IMR-90 (cell line): ENCODE measurements at regions of chr7 and their contacts with region 1.

Region 1: DNA sequence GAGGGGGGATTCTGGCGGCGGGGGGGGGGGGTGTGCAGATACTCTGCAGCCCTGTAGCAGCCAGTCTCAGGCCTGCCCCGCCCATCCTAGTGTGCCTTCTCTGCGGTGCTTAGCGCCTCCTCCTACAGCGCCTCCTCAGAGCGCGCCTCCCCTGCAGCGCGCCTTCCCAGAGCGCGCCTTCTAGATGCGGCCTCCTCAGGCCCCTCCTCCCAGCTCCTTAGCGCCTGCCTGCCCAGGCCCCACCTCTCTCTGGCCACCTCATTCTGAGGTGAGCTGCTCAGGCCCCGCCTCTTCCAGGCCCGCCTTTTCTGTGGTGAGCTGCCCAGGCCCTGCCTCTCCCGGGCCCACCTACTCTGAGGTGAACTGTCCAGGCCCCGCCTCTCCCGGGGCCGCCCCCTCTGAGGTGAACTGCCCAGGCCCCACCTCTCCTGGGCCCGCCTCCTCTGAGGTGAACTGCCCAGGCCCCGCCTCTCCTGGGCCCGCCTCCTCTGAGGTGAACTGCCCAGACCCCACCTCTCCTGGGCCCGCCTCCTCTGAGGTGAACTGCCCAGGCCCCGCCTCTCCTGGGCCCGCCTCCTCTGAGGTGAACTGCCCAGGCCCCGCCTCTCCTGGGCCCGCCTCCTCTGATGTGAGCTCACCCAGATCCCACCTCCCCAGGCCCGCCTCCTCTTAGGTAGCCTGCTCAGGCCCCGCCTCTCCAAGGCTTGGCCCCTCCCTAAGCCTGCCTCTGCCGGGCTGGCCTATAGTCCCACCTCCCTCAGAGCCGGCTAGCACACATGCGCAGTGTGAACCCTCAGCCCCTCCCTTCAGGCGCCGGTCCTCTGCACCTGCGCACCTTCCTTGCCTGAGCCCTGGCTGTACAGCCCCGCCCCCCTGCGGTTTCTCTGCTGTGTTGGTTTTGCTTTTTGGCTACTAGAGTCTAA is 2.1 kb upstream of the SGCE start:
- DNase-seq: peak; percentile 90
- ATAC-seq: peak; percentile 91
- H3K4me3 ChIP-seq: peak overlapping the region; percentile 58
- H3K27ac ChIP-seq: no peak overlapping the region
- H3K4me1 ChIP-seq: no peaks in the 10 kb centered on the region
- H3K27me3 ChIP-seq: no peaks in the 10 kb centered on the region
- CTCF ChIP-seq: no peak
- POLR2A ChIP-seq: no peak
- RAD21 ChIP-seq: no peak

Region 2: DNA sequence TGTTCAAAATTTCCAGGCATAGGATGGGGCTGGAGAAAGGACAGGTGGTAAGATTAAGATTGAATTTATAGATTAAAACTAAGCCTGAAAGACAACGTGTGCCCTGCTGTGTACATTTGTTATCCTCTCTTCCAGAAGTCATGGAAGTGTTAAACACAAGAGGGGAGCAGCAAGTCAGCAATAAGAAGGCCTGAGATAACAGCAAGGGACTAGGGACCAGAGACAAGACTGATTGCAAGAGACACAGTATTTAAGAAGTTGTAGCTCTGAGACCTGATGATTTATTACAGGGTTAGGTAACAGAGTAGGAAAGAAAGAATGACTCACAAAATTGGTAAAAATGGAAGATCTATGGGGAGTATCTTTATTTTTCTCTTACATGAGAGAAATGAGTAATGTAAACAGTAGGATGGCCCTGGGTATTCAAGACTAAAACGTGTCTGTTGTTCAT is 319.1 kb before region 1 on chr7:
- CTCF ChIA-PET with region 1: no interaction called
- POLR2A ChIA-PET with region 1: no interaction called
- dilution Hi-C with region 1: no loop called
- in situ Hi-C with region 1: no loop called
- intact Hi-C with region 1: no loop called
- DNase-seq: peak; percentile 83
- ATAC-seq: peak; percentile 62
- H3K4me3 ChIP-seq: no peak overlapping the region
- H3K27ac ChIP-seq: no peak overlapping the region
- H3K4me1 ChIP-seq: peaks cover 22% of the 10 kb centered on the region
- H3K27me3 ChIP-seq: no peaks in the 10 kb centered on the region
- CTCF ChIP-seq: no peak
- POLR2A ChIP-seq: no peak
- RAD21 ChIP-seq: no peak

Region 3: DNA sequence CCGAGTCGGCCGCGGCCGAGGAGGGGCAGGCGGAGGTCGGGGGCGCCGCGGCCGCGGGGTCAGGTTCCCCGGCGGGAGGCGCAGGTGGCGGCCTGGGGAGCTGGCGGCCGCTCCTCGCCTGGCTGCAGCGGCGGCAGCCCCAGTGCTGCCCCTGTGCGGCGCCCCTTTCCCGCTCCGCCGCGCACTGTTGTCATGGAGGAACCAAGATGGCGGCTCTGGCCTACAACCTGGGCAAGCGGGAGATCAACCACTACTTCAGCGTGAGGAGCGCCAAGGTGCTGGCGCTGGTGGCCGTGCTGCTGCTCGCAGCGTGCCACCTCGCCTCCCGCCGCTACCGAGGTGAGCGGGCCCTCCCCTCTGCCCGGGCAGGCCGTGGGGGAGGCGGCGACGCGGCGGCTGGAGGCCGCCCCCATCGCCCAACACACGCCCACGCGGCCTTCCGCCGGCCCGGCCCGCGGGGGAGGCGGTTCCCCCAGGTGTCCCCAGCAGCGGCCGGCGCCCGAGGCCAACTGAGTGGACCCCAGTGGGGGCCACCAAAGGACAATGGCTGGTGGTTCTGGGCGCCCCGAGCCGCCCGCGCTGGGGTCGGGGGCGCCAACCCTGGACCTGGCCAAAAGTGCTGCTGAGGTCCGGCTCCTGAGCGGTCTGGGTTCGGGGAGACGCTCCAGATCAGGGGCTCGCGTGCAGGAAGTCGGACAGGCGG is 148.0 kb before region 1 on chr7:
- CTCF ChIA-PET with region 1: no interaction called
- POLR2A ChIA-PET with region 1: interaction called, 4 read pairs
- dilution Hi-C with region 1: no loop called
- in situ Hi-C with region 1: no loop called
- intact Hi-C with region 1: loop called (anchors 10 kb)
- DNase-seq: peak; percentile 53
- ATAC-seq: peak; percentile 91
- H3K4me3 ChIP-seq: peak overlapping the region; percentile 96
- H3K27ac ChIP-seq: peak overlapping the region; percentile 90
- H3K4me1 ChIP-seq: peaks cover 3% of the 10 kb centered on the region
- H3K27me3 ChIP-seq: no peaks in the 10 kb centered on the region
- CTCF ChIP-seq: peak; percentile 39
- POLR2A ChIP-seq: 0 out of 2 replicates have a peak, but pooled peaks have one; percentile 45
- RAD21 ChIP-seq: peak; percentile 34

Region 4: GRCh38 chr7:94697035-94697974 is 39.3 kb after region 1 on chr7:
- CTCF ChIA-PET with region 1: no interaction called
- POLR2A ChIA-PET with region 1: no interaction called
- dilution Hi-C with region 1: no loop called
- in situ Hi-C with region 1: no loop called
- intact Hi-C with region 1: loop called (anchors 2 kb)
- DNase-seq: peak; percentile 97
- ATAC-seq: peak; percentile 84
- H3K4me3 ChIP-seq: no peak overlapping the region
- H3K27ac ChIP-seq: peak overlapping the region; percentile 64; the same call in 1 of the 2 replicates
- H3K4me1 ChIP-seq: peaks cover 1% of the 10 kb centered on the region
- H3K27me3 ChIP-seq: no peaks in the 10 kb centered on the region; the same call in 1 of the 2 replicates
- CTCF ChIP-seq: no peak
- POLR2A ChIP-seq: no peak
- RAD21 ChIP-seq: no peak

Region 5: DNA sequence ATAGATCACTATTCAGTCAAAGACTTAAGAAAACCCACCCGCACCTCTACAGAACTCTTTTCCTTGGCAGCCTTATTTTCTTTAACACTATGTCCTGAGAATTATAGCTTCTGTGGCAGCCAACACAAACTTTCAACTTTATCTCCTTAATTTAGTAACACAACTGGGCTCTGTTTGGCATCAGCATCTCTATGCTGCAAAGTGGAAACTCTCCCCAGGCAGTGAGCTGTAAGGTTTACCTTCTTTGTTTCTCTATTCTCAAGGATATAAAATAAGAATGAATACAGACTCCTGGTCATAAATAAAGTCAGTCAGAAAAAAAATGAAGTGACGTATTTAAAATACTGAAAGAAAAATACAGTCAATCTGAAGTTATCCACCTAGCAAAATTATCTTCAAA is 134.2 kb after region 1 on chr7:
- CTCF ChIA-PET with region 1: no interaction called
- POLR2A ChIA-PET with region 1: no interaction called
- dilution Hi-C with region 1: no loop called
- in situ Hi-C with region 1: no loop called
- intact Hi-C with region 1: no loop called
- DNase-seq: no peak
- ATAC-seq: no peak
- H3K4me3 ChIP-seq: no peak overlapping the region
- H3K27ac ChIP-seq: no peak overlapping the region
- H3K4me1 ChIP-seq: no peaks in the 10 kb centered on the region
- H3K27me3 ChIP-seq: no peaks in the 10 kb centered on the region
- CTCF ChIP-seq: no peak
- POLR2A ChIP-seq: no peak
- RAD21 ChIP-seq: no peak

Region 6: GRCh38 chr7:95899919-95900513 is 1242.0 kb after region 1 on chr7:
- CTCF ChIA-PET with region 1: no interaction called
- POLR2A ChIA-PET with region 1: no interaction called
- dilution Hi-C with region 1: no loop called
- in situ Hi-C with region 1: no loop called
- intact Hi-C with region 1: no loop called
- DNase-seq: no peak
- ATAC-seq: no peak
- H3K4me3 ChIP-seq: no peak overlapping the region
- H3K27ac ChIP-seq: no peak overlapping the region
- H3K4me1 ChIP-seq: no peaks in the 10 kb centered on the region
- H3K27me3 ChIP-seq: no peaks in the 10 kb centered on the region
- CTCF ChIP-seq: no peak
- POLR2A ChIP-seq: no peak
- RAD21 ChIP-seq: no peak